CD8-positive, alpha-beta memory T cell (primary cell): ENCODE measurements at regions of chr11 and their contacts with region 1.

Region 1: GRCh38 chr11:128472128-128473089 is 114.9 kb downstream of the ETS1 start:
- DNase-seq: peak in 3 of 5 donors; percentile 48 to 64 (median 63)
- H3K4me3 ChIP-seq: peak overlapping the region; percentile 69
- H3K4me3 Mint-ChIP-seq: peak overlapping the region; percentile 62 to 86 (median 77)
- H3K27ac ChIP-seq: peak overlapping the region; percentile 56
- H3K27ac Mint-ChIP-seq: peak overlapping the region; percentile 89 to 99 (median 96)
- H3K4me1 ChIP-seq: peaks cover 96% of the 10 kb centered on the region
- H3K4me1 Mint-ChIP-seq: peaks cover 99 to 100% (median 100%) of the 10 kb centered on the region in 3 donors
- H3K27me3 ChIP-seq: no peaks in the 10 kb centered on the region
- H3K27me3 Mint-ChIP-seq: peaks cover 0 to 1% of the 10 kb centered on the region in 2 donors

Region 2: DNA sequence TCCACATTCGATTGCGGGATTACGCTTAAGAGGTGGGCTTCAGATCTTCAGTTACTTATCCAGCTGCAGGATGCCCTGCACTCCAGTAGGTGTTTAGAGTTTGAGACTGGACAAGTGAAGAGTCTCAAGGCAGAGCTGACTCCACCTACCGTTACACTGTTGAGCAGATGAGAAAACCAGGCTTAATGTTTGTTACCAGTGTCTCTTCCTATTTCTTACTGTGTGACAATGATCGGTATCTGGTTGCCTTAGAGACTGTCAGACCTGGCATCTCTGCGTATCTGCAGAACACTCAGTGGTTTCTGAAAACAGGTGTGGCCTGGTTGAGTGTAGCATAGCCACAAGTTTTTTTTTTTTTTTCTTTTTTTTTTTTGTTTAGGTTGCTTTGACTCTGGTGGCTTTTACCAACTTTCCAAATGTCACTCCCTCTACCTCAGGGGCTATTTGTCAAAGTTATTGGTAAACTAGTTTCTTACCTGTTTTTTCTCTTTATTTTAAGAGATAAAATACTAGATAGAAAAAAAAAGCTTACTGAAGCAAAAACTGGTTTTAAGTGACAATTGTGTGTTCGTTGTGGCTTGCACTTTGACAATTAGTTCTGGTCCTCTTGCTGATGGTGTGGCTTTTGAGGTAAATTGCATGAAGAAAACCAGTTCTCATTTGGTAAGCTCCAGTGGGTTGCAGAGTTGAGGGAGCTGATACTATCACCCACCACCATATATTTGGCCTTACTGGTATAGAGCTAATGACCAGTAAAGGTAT is 169.8 kb before region 1 on chr11:
- CTCF ChIA-PET with region 1: interaction called, 12 read pairs
- POLR2A ChIA-PET with region 1: interaction called, 6 read pairs
- DNase-seq: peak; percentile 41 to 92 (median 90)
- H3K4me3 ChIP-seq: peak overlapping the region; percentile 76
- H3K4me3 Mint-ChIP-seq: peak overlapping the region; percentile 88 to 96 (median 92)
- H3K27ac ChIP-seq: peak overlapping the region; percentile 92
- H3K27ac Mint-ChIP-seq: peak overlapping the region; percentile 94 to 100 (median 98)
- H3K4me1 ChIP-seq: peaks cover 97% of the 10 kb centered on the region
- H3K4me1 Mint-ChIP-seq: peaks cover 82 to 98% (median 96%) of the 10 kb centered on the region in 3 donors
- H3K27me3 ChIP-seq: no peaks in the 10 kb centered on the region
- H3K27me3 Mint-ChIP-seq: no peaks in the 10 kb centered on the region

Region 3: DNA sequence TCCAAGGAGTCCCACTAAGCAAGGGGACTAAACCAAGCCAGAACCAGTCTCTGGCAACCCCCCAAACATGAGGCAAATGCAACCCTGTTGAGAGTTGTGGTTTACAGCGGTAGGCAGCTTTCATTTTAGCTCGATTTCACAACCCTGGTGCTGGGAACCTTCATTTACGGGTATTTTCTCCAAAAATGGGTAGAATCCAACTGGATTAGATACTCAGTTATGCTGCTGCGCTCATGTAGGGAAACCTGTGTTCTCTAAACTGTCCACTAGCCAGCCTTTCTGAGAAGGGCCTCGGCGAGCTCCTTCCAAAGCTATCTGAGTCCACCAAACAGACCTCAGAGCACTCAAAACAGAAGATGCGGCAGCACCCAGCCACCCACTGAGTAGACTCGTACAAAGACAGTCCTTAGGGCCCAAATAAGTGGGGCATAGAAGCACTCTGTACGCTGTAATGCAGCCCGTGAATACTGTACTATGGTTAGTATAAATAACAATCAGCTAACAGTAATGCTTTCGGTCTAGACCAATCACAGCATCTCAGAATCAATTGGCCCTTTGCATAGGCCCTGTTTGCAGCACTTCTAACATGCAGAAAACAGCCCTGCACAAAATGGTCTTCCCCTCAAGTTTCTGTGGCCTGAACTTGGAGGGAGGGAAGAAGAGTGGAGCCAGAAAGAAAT is 10.2 kb after region 1 on chr11:
- CTCF ChIA-PET with region 1: interaction called, 3 read pairs
- POLR2A ChIA-PET with region 1: interaction called, 15 read pairs
- DNase-seq: peak in 4 of 5 donors; percentile 57 to 83 (median 78)
- H3K4me3 ChIP-seq: peak overlapping the region; percentile 44
- H3K4me3 Mint-ChIP-seq: peak overlapping the region; percentile 72 to 89 (median 81)
- H3K27ac ChIP-seq: peak overlapping the region; percentile 52
- H3K27ac Mint-ChIP-seq: peak overlapping the region; percentile 82 to 99 (median 96)
- H3K4me1 ChIP-seq: peaks cover 96% of the 10 kb centered on the region
- H3K4me1 Mint-ChIP-seq: peaks cover 96 to 99% (median 97%) of the 10 kb centered on the region in 3 donors
- H3K27me3 ChIP-seq: no peaks in the 10 kb centered on the region
- H3K27me3 Mint-ChIP-seq: peaks cover 0 to 2% of the 10 kb centered on the region in 2 donors

Region 4: GRCh38 chr11:128492461-128492860 is 20.1 kb after region 1 on chr11:
- CTCF ChIA-PET with region 1: interaction called, 11 read pairs
- POLR2A ChIA-PET with region 1: interaction called, 6 read pairs
- DNase-seq: no peak
- H3K4me3 ChIP-seq: peak overlapping the region; percentile 12
- H3K4me3 Mint-ChIP-seq: peak overlapping the region; percentile 39 to 82 (median 71)
- H3K27ac ChIP-seq: no peak overlapping the region
- H3K27ac Mint-ChIP-seq: peak overlapping the region; percentile 82 to 99 (median 97)
- H3K4me1 ChIP-seq: peaks cover 97% of the 10 kb centered on the region
- H3K4me1 Mint-ChIP-seq: peaks cover 95 to 100% (median 99%) of the 10 kb centered on the region in 3 donors
- H3K27me3 ChIP-seq: no peaks in the 10 kb centered on the region
- H3K27me3 Mint-ChIP-seq: peaks cover 0 to 2% of the 10 kb centered on the region in 2 donors

Region 5: DNA sequence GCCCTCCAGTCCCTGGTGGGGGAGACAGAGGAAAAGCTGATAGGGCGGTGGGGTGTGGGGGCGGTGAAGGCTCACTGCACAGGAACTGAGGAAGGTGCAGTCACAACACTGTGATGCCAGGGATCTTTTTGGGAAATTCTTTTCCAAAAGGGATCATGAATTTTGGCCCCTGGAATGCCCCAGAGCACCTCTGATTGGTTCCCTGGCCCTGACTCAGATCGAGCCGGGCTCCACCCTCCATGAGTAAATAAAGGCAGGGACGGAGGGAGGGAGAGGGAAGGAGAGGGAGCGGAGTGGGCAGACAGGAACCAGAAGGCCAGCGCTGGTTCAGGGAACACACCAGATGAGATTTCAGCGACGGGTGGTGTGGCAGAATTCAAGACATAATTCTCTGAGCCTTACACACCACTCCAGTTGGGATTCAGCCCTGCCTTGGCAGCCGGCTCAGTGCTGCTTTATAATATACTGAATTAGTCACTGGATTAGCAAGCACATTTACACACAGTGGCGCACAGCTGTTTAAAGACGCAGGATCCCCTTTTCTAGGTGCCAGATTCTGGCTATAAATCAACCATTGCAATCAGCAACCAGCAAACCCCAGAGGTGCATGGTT is 34.7 kb after region 1 on chr11:
- CTCF ChIA-PET with region 1: interaction called, 17 read pairs
- POLR2A ChIA-PET with region 1: interaction called, 44 read pairs
- DNase-seq: no peak
- H3K4me3 ChIP-seq: peak overlapping the region; percentile 97
- H3K4me3 Mint-ChIP-seq: peak overlapping the region; percentile 81 to 99 (median 98)
- H3K27ac ChIP-seq: peak overlapping the region; percentile 48
- H3K27ac Mint-ChIP-seq: peak overlapping the region; percentile 93 to 99 (median 98)
- H3K4me1 ChIP-seq: peaks cover 99% of the 10 kb centered on the region
- H3K4me1 Mint-ChIP-seq: peaks cover 99 to 100% (median 100%) of the 10 kb centered on the region in 3 donors
- H3K27me3 ChIP-seq: no peaks in the 10 kb centered on the region
- H3K27me3 Mint-ChIP-seq: no peaks in the 10 kb centered on the region